ENCODE measurements at regions of chr12 and their contacts with region 1.

Region 1: DNA sequence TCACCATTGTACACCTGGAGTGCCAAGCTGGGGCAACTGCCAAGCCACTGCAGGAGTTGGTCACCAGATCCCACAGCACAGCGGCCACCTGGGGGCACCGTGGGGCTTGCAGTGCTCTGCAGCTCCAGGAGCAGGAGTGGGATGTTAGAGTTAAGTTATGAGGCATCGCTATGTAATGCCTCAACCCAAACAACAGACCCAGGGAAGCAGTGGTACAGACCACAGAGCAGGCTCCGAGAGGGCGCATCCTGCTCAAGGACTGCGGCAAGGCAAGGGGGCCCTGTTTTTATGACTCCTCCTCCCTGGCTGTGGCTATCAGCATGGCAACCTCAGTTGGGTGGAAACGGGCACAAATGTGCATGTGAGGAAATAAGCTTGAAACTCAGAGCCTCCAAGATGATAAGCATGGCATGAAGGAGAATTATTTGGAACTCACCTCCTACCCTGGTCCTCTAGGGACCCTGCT is 63.1 kb downstream of the ARL6IP4 start:
- DNase-seq: peak; percentile 48 to 82
- H3K4me3 ChIP-seq: no peak overlapping the region
- H3K27ac ChIP-seq: no peak overlapping the region
- H3K4me1 ChIP-seq: no peaks in the 10 kb centered on the region
- H3K27me3 ChIP-seq: no peaks in the 10 kb centered on the region
- CTCF ChIP-seq: peak; percentile 71

Region 2: DNA sequence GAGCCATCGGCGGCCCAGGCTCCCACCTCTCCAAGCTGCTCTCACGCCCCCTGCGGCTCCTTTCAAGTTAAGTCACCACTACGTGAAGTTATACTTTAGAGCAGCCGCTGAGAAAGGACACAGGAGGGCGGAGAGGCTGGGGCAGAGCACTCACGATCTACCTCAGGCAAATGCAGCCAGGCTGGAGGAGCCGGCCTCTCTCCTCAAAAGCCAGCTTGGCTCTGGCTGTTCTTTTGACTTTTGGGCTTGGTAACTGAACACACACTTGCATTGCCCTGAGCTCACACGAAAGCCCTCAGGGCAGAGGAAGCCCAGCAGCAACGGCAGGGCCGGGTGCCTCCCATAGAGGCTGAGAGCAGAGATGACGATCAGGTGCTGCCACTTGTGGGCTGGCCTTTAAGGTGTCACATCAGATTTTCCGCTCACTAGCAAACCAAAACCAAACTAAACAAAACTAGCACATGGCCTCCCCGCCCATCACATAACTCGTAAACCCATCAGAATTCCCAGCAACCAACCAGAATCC is 32.1 kb after region 1 on chr12:
- CTCF ChIA-PET with region 1: no interaction called
- POLR2A ChIA-PET with region 1: no interaction called
- intact Hi-C with region 1: loop called (anchors 1 kb)
- DNase-seq: peak; percentile 72 to 81
- H3K4me3 ChIP-seq: no peak overlapping the region
- H3K27ac ChIP-seq: 0 out of 2 replicates have a peak overlapping the region, but pooled peaks have one; percentile 19
- H3K4me1 ChIP-seq: peaks cover 36% of the 10 kb centered on the region
- H3K27me3 ChIP-seq: no peaks in the 10 kb centered on the region
- CTCF ChIP-seq: no peak

Region 3: DNA sequence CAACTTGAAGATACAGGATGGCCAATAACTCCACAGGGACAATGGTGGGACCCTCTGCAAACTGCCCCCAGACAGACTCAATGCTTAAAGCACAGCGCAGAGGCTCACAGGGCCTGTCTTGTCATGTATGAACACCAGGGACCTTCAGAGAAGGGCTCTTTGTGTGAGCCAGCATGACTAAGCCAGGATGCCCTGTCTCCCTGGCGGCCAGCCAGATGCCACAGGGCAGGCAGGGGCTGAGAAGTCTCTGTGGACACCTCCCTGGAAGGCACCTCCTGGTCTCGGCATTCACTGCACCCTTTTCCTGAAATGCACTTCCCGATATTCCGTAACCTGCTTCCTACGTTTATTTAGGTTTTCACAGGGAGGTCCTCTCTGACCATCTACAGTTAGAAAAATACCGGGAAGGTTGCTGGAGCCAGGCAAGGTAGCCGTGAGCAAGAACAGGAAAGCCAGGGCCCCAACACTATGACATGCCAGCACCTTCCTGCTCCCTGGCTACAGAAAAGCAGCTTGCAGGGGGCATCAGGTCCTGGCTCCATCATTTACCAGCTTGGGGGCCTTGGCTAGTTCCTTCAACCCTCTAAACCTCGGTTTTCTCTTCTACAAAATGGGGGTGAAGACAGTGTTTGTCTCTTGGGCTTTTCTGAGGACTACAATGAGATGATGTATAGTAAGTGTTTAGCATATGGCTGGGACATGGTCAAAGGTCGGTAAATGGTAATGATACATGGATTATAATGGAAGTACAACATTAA is 42.3 kb after region 1 on chr12:
- CTCF ChIA-PET with region 1: no interaction called
- POLR2A ChIA-PET with region 1: no interaction called
- intact Hi-C with region 1: loop called (anchors 5 kb)
- DNase-seq: peak; percentile 81 to 89
- H3K4me3 ChIP-seq: no peak overlapping the region
- H3K27ac ChIP-seq: peak overlapping the region; percentile 38
- H3K4me1 ChIP-seq: peaks cover 69% of the 10 kb centered on the region
- H3K27me3 ChIP-seq: no peaks in the 10 kb centered on the region
- CTCF ChIP-seq: no peak; the same call in 1 of the 2 replicates

Region 4: DNA sequence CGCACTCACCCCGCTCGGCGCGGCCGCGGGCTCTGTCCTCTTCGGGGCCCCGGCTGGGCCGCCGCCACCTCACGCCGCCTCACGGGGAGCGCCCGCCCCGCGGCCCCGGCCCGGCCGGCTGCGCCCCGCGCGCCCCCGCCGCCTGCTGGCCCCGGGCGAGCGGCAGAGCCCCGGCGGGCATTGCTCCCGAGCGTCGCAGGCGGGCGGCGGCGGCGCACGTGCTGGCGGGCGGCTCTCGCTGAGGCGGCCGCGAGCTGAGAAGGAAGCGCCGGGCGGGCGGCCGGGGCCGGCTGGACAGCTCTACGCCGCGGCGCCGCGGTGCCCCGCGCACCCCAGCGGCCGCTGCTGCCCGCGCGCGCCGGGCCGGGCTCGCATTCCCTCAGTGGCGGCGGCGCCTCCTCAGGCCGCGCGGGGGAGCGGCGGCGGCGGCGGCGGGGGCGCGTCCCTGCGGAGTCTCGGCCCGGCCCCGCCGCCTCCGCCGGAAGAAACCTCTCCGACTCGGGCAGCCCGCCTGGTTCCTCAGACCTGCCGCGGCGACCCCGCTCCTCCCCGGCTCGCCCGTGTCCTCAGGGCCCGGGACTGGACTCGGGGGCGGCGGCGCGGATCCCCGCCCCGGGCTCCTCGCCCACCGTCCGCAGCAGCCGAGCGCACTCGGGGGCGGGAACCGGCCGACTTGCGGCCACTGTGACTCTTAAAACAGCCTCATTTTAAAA is 107.3 kb after region 1 on chr12 and contains the start of gene PITPNM2:
- CTCF ChIA-PET with region 1: interaction called, 7 read pairs
- POLR2A ChIA-PET with region 1: no interaction called
- intact Hi-C with region 1: loop called (anchors 1 kb)
- DNase-seq: peak in 1 of 2 experiments; percentile 57
- H3K4me3 ChIP-seq: peak within 1 kb of the TSS; percentile 88
- H3K27ac ChIP-seq: 0 out of 2 replicates have a peak within 1 kb of the TSS, but pooled peaks have one; percentile 20
- H3K4me1 ChIP-seq: peaks cover 19% of the 10 kb centered on the region
- H3K27me3 ChIP-seq: no peaks in the 10 kb centered on the region
- CTCF ChIP-seq: no peak
- total RNA-seq, gene PITPNM2: 16.6 and 21.6 TPM in 2 replicates

Region 5: GRCh38 chr12:123180171-123180570 is 136.6 kb after region 1 on chr12:
- CTCF ChIA-PET with region 1: no interaction called
- POLR2A ChIA-PET with region 1: interaction called, 3 read pairs
- intact Hi-C with region 1: loop called (anchors 5 kb)
- DNase-seq: no peak
- H3K4me3 ChIP-seq: no peak overlapping the region
- H3K27ac ChIP-seq: no peak overlapping the region
- H3K4me1 ChIP-seq: no peaks in the 10 kb centered on the region
- H3K27me3 ChIP-seq: no peaks in the 10 kb centered on the region
- CTCF ChIP-seq: no peak

Region 6: DNA sequence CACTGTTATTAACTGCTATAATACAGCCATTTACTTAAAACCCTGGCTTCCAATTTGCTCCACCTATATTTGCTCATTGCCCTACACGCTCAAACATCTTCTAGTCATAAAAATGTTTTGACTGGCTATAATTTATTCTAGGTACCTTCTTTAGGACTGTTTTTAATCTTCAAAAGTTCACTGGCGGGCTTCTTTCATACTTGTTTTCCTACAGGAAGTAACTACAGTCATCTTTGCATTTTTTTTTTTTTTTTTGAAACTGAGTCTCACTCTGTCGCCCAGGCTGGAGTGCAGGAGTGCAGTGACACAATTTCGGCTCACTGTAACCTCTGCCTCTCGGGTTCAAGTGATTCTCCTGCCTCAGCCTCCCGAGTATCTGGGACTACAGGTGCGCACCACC is 156.8 kb after region 1 on chr12:
- CTCF ChIA-PET with region 1: interaction called, 10 read pairs
- POLR2A ChIA-PET with region 1: no interaction called
- intact Hi-C with region 1: no loop called
- DNase-seq: no peak
- H3K4me3 ChIP-seq: no peak overlapping the region
- H3K27ac ChIP-seq: no peak overlapping the region
- H3K4me1 ChIP-seq: no peaks in the 10 kb centered on the region
- H3K27me3 ChIP-seq: no peaks in the 10 kb centered on the region
- CTCF ChIP-seq: no peak